AG04449 (cell line): ENCODE measurements at regions of chr14 and their contacts with region 1.

Region 1: GRCh38 chr14:63388763-63389431 is 70.2 kb upstream of the GPHB5 start:
- DNase-seq: no peak
- H3K4me3 ChIP-seq: no peak overlapping the region
- CTCF ChIP-seq: peak; percentile 88

Region 2: DNA sequence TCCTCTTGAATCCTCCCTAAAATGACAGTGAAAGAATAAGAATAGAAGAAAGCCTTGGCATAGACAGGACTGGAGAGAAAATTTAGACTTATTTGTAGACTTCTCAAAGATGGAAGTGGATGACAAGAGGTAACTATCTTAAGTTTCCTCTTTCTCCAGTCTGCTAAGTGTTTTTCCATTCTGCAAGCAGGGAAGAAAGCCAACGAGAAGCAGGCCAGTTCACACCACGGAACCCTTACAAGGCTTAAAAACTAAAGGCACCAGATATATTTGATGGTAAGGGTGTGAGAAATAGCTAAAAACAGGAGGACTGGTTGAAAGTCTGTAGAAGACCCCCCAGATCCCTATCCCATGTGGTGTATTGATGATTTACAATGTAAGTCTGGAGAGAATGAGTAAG is 12.7 kb after region 1 on chr14:
- CTCF ChIA-PET with region 1: interaction called, 10 read pairs
- POLR2A ChIA-PET with region 1: no interaction called
- DNase-seq: no peak
- H3K4me3 ChIP-seq: no peak overlapping the region
- CTCF ChIP-seq: no peak

Region 3: DNA sequence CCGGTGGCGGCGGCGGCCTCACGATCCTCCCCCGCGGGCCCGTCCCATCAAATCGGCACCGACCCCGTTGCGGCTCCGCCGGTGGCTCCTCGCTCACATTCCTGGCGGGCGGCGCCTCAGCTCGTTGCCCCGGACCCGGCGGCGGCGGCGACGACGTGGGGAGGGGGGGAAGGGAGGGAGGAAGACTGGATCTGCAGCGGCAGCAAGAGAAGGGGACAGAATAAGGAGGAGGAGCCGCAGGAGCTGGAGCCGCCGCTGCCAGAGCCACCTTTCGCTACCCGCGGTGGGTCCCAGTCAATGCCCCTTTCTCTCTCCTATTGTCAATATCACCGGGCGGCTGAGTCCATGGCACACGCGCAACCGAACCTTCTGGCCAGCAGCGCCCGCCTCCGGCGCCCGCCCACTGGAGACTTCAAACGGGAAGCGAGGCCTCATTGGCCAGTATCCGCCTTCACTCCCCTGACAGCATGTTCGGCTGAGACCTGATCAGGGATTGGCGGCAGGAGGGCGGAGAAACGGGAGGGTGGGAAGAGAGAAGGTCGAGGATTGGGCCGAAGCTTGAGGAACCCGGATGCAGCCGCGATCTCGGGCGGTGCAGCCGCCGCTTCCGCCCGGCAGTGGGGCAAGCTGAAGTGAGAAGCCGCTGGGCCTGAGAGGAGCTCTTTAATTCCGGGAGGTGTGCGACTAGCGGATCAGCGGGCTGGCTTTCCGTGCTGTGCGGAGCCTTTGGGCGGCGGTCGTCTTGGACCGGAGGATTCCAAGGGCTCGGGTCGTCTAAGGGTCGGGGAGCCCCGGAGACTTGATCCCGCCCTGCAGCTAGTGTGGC is 154.3 kb after region 1 on chr14 and contains the start of gene PPP2R5E:
- CTCF ChIA-PET with region 1: interaction called, 24 read pairs
- POLR2A ChIA-PET with region 1: interaction called, 6 read pairs
- DNase-seq: peak; percentile 93
- H3K4me3 ChIP-seq: peak within 1 kb of the TSS; percentile 96
- CTCF ChIP-seq: no peak

Region 4: DNA sequence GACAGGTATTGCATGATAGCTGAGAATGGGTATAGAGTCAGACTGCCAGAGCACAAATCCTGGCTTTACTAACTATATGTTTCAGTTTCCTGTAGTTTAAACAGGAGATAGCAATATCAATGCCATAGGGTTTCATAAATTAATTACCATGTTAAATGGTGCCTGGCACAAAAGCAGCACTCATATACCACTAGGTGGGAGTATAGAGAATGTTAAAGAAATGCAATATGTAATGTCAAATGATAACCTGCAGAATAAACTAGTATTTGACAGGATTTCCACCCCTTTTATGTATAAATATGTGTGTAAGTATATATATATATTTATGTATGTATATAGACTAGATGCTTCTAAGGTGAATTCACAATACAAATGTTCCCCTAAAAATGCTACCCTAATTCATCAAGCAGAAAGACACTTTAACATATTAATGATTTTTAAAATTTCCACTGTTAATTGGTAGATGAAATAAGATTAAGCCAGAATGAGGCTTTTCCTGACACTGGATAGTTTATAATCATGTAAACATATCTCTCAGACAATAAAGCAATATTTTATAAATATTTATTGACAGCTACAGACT is 244.1 kb after region 1 on chr14:
- CTCF ChIA-PET with region 1: interaction called, 21 read pairs
- POLR2A ChIA-PET with region 1: no interaction called
- DNase-seq: no peak
- H3K4me3 ChIP-seq: no peak overlapping the region
- CTCF ChIP-seq: peak; percentile 35

Region 5: GRCh38 chr14:63641473-63642228 is 252.8 kb after region 1 on chr14 and contains the start of gene WDR89:
- CTCF ChIA-PET with region 1: interaction called, 10 read pairs
- POLR2A ChIA-PET with region 1: no interaction called
- DNase-seq: peak; percentile 98
- H3K4me3 ChIP-seq: peak within 1 kb of the TSS; percentile 95
- CTCF ChIP-seq: peak; percentile 56

Region 6: GRCh38 chr14:63770187-63770807 is 381.4 kb after region 1 on chr14:
- CTCF ChIA-PET with region 1: interaction called, 24 read pairs
- POLR2A ChIA-PET with region 1: no interaction called
- DNase-seq: peak; percentile 21
- H3K4me3 ChIP-seq: no peak overlapping the region
- CTCF ChIP-seq: peak; percentile 55